ENCODE measurements at regions of chr13 and their contacts with region 1.

Region 1: GRCh38 chr13:32538621-32539246 is at the start of gene N4BP2L2:
- DNase-seq: peak; percentile 70 to 94 (median 91)
- ATAC-seq: peak; percentile 98
- H3K4me3 ChIP-seq: peak within 1 kb of the TSS; percentile 78
- H3K4me3 Mint-ChIP-seq: peak within 1 kb of the TSS; percentile 94 to 100 (median 100)
- H3K27ac ChIP-seq: peak within 1 kb of the TSS; percentile 96
- H3K27ac Mint-ChIP-seq: peak within 1 kb of the TSS; percentile 99 to 100 (median 100)
- H3K4me1 ChIP-seq: peaks cover 32 to 39% of the 10 kb centered on the region in 2 donors
- H3K4me1 Mint-ChIP-seq: peaks cover 33 to 56% (median 50%) of the 10 kb centered on the region in 7 donors
- H3K27me3 ChIP-seq: no peaks in the 10 kb centered on the region
- H3K27me3 Mint-ChIP-seq: peaks cover 0 to 11% (median 3%) of the 10 kb centered on the region in 5 donors
- total RNA-seq, gene N4BP2L2: 136 to 358 (median 226) TPM

Region 2: DNA sequence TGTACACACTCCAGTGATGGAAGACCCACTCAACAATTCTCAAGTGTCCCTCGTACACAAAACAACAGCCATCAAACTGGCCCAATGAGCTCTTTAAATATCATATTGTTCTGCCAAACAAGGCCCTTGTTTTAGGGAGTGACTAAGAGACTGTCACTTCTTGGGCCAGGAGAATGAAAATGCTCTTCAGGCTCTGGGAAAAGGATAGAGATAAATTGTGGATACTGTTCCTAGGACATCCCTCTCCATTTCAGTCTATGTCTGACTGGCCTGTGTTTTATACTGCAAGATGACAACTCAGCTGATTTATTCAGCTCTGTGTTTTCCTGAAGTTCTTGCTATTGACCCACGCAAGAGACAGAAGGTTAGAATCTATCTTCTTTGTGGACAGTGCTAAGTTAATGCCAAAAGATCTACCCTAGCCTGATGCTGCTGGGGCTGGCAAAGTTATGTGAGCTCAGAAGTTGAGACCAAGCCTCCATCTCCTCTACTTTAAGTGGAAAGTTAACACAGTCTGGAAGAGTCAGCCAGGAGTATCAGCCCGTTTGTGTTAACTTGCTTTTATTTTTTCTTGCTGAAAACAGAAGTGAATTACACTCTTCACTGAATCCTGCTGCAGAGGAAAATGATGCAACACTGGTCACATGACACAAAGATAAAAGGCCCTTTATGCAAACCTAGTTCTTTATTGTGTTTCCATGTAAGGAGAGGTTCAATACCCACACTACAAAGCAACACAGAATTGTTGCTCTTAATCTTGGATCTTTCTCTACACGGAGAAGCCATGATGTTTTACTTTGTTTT is 492.6 kb before region 1 on chr13:
- CTCF ChIA-PET with region 1: no interaction called
- POLR2A ChIA-PET with region 1: no interaction called
- intact Hi-C with region 1: loop called in 1 of 2 experiments (anchors 5 kb)
- DNase-seq: peak in 6 of 9 donors; percentile 24 to 55 (median 51)
- ATAC-seq: peak; percentile 65
- H3K4me3 ChIP-seq: no peak overlapping the region
- H3K4me3 Mint-ChIP-seq: peak overlapping the region in 9 of 10 donors; percentile 20 to 72 (median 65)
- H3K27ac ChIP-seq: no peak overlapping the region
- H3K27ac Mint-ChIP-seq: peak overlapping the region; percentile 23 to 86 (median 76)
- H3K4me1 ChIP-seq: peaks cover 0 to 48% of the 10 kb centered on the region in 2 donors
- H3K4me1 Mint-ChIP-seq: peaks cover 10 to 79% (median 62%) of the 10 kb centered on the region in 7 donors
- H3K27me3 ChIP-seq: no peaks in the 10 kb centered on the region
- H3K27me3 Mint-ChIP-seq: peaks cover 0 to 15% (median 0%) of the 10 kb centered on the region in 5 donors

Region 3: DNA sequence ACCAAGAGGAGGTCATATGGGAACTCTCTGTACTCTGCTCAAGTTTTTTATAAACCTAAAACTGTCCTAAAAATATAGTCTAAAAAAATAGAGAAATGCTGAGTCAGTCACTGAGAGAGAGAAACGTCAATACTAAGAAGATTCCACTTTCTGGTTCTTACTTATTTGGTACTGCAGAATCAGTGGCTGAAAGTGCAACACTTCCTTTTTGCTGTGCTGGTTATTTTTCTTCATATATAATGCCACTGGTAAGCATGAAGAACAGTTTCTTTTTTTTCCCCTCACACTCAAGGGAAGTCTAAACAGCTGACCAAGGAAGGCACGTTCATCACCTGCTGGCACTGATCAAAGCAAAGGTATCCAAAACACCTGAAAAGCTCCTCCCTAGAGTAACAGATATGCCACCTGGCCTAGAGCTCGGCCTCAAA is 66.5 kb before region 1 on chr13:
- CTCF ChIA-PET with region 1: no interaction called
- POLR2A ChIA-PET with region 1: no interaction called
- intact Hi-C with region 1: loop called (anchors 2 to 5 kb)
- DNase-seq: no peak
- ATAC-seq: no peak
- H3K4me3 ChIP-seq: no peak overlapping the region
- H3K4me3 Mint-ChIP-seq: no peak overlapping the region
- H3K27ac ChIP-seq: no peak overlapping the region
- H3K27ac Mint-ChIP-seq: peak overlapping the region in 2 of 9 donors; percentile 41 to 64
- H3K4me1 ChIP-seq: no peaks in the 10 kb centered on the region
- H3K4me1 Mint-ChIP-seq: peaks cover 0 to 17% (median 0%) of the 10 kb centered on the region in 7 donors
- H3K27me3 ChIP-seq: no peaks in the 10 kb centered on the region
- H3K27me3 Mint-ChIP-seq: no peaks in the 10 kb centered on the region

Region 4: GRCh38 chr13:32669030-32669646 is 130.4 kb after region 1 on chr13:
- CTCF ChIA-PET with region 1: no interaction called
- POLR2A ChIA-PET with region 1: interaction called, 3 read pairs
- intact Hi-C with region 1: loop called in 1 of 2 experiments (anchors 5 kb)
- DNase-seq: peak in 7 of 9 donors; percentile 11 to 57 (median 37)
- ATAC-seq: peak; percentile 72
- H3K4me3 ChIP-seq: no peak overlapping the region
- H3K4me3 Mint-ChIP-seq: no peak overlapping the region
- H3K27ac ChIP-seq: no peak overlapping the region
- H3K27ac Mint-ChIP-seq: peak overlapping the region in 2 of 9 donors; percentile 2 to 14
- H3K4me1 ChIP-seq: no peaks in the 10 kb centered on the region
- H3K4me1 Mint-ChIP-seq: peaks cover 2 to 31% (median 11%) of the 10 kb centered on the region in 7 donors
- H3K27me3 ChIP-seq: no peaks in the 10 kb centered on the region
- H3K27me3 Mint-ChIP-seq: no peaks in the 10 kb centered on the region

Region 5: GRCh38 chr13:32838945-32839344 is 300.2 kb after region 1 on chr13:
- CTCF ChIA-PET with region 1: no interaction called
- POLR2A ChIA-PET with region 1: no interaction called
- intact Hi-C with region 1: loop called in 1 of 2 experiments (anchors 5 kb)
- DNase-seq: peak in 4 of 9 donors; percentile 8 to 20 (median 16)
- ATAC-seq: no peak
- H3K4me3 ChIP-seq: no peak overlapping the region
- H3K4me3 Mint-ChIP-seq: peak overlapping the region in 5 of 10 donors; percentile 20 to 63 (median 25)
- H3K27ac ChIP-seq: no peak overlapping the region
- H3K27ac Mint-ChIP-seq: peak overlapping the region in 5 of 9 donors; percentile 26 to 91 (median 63)
- H3K4me1 ChIP-seq: peaks cover 0 to 12% of the 10 kb centered on the region in 2 donors
- H3K4me1 Mint-ChIP-seq: peaks cover 4 to 28% (median 16%) of the 10 kb centered on the region in 7 donors
- H3K27me3 ChIP-seq: no peaks in the 10 kb centered on the region
- H3K27me3 Mint-ChIP-seq: peaks cover 0 to under 1% (median 0%) of the 10 kb centered on the region in 5 donors

Region 6: GRCh38 chr13:33817901-33818706 is 1279.4 kb after region 1 on chr13 and contains the start of gene RFC3:
- CTCF ChIA-PET with region 1: no interaction called
- POLR2A ChIA-PET with region 1: no interaction called
- intact Hi-C with region 1: loop called (anchors 1 to 5 kb)
- DNase-seq: peak; percentile 78 to 89 (median 87)
- ATAC-seq: peak; percentile 95
- H3K4me3 ChIP-seq: peak within 1 kb of the TSS; percentile 84
- H3K4me3 Mint-ChIP-seq: peak within 1 kb of the TSS; percentile 86 to 100 (median 96)
- H3K27ac ChIP-seq: peak within 1 kb of the TSS; percentile 70
- H3K27ac Mint-ChIP-seq: peak within 1 kb of the TSS; percentile 89 to 98 (median 95)
- H3K4me1 ChIP-seq: peaks cover 0 to 8% of the 10 kb centered on the region in 2 donors
- H3K4me1 Mint-ChIP-seq: peaks cover 14 to 44% (median 25%) of the 10 kb centered on the region in 7 donors
- H3K27me3 ChIP-seq: no peaks in the 10 kb centered on the region
- H3K27me3 Mint-ChIP-seq: peaks cover 0 to 7% (median 0%) of the 10 kb centered on the region in 5 donors
- total RNA-seq, gene RFC3: 4.5 to 29.9 (median 7.1) TPM

Measured in naive thymus-derived CD4-positive, alpha-beta T cell (primary cell).